ENCODE measurements at regions of chr5 and their contacts with region 1.

Region 1: GRCh38 chr5:147509710-147510651 is at the start of gene DPYSL3:
- DNase-seq: peak; percentile 22 to 88
- H3K4me3 ChIP-seq: peak within 1 kb of the TSS; percentile 65 to 70
- H3K27ac ChIP-seq: peak within 1 kb of the TSS; percentile 81 to 83
- H3K4me1 ChIP-seq: peaks cover 0 to 2% of the 10 kb centered on the region in 2 donors
- H3K27me3 ChIP-seq: no peaks in the 10 kb centered on the region
- CTCF ChIP-seq: peak in 2 of 3 experiments; percentile 47 to 60
- total RNA-seq, gene DPYSL3: 110 TPM

Region 2: GRCh38 chr5:146494656-146495055 is 1015.3 kb before region 1 on chr5:
- intact Hi-C with region 1: no loop called
- DNase-seq: no peak
- H3K4me3 ChIP-seq: no peak overlapping the region
- H3K27ac ChIP-seq: no peak overlapping the region
- H3K4me1 ChIP-seq: no peaks in the 10 kb centered on the region
- H3K27me3 ChIP-seq: no peaks in the 10 kb centered on the region
- CTCF ChIP-seq: no peak

Region 3: DNA sequence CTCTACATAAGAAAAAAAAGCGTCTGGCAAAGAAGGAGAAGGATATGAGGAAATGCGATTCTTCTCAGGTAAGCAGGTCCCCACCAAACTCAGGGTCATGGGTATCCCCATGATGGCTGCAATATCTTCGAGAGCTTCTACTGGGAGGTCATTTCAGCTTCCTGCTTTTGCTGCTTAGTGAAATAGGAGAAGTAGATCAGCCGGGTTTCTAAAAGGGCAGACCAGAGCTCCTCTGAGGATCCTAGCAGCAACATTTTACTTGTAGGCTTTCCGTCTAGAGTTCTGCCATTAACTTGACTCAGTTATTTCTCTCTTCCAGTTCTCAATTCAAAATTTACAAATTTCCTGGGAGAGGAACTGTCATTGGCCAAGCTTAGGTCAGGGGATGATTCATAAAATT is 134.8 kb before region 1 on chr5:
- intact Hi-C with region 1: loop called (anchors 5 kb)
- DNase-seq: no peak
- H3K4me3 ChIP-seq: no peak overlapping the region
- H3K27ac ChIP-seq: no peak overlapping the region
- H3K4me1 ChIP-seq: no peaks in the 10 kb centered on the region
- H3K27me3 ChIP-seq: no peaks in the 10 kb centered on the region
- CTCF ChIP-seq: no peak

Region 4: GRCh38 chr5:147403651-147404640 is 106.0 kb before region 1 on chr5:
- intact Hi-C with region 1: loop called (anchors 5 kb)
- DNase-seq: peak; percentile 76 to 94
- H3K4me3 ChIP-seq: peak overlapping the region; percentile 7 to 36
- H3K27ac ChIP-seq: peak overlapping the region; percentile 94 to 98
- H3K4me1 ChIP-seq: peaks cover 22 to 50% of the 10 kb centered on the region in 2 donors
- H3K27me3 ChIP-seq: no peaks in the 10 kb centered on the region
- CTCF ChIP-seq: no peak

Region 5: GRCh38 chr5:147483961-147484707 is 25.8 kb before region 1 on chr5:
- intact Hi-C with region 1: loop called (anchors 1 kb)
- DNase-seq: peak in 1 of 2 donors; percentile 85
- H3K4me3 ChIP-seq: no peak overlapping the region
- H3K27ac ChIP-seq: peak overlapping the region; percentile 64 to 82
- H3K4me1 ChIP-seq: peaks cover 10 to 46% of the 10 kb centered on the region in 2 donors
- H3K27me3 ChIP-seq: no peaks in the 10 kb centered on the region
- CTCF ChIP-seq: no peak

Region 6: DNA sequence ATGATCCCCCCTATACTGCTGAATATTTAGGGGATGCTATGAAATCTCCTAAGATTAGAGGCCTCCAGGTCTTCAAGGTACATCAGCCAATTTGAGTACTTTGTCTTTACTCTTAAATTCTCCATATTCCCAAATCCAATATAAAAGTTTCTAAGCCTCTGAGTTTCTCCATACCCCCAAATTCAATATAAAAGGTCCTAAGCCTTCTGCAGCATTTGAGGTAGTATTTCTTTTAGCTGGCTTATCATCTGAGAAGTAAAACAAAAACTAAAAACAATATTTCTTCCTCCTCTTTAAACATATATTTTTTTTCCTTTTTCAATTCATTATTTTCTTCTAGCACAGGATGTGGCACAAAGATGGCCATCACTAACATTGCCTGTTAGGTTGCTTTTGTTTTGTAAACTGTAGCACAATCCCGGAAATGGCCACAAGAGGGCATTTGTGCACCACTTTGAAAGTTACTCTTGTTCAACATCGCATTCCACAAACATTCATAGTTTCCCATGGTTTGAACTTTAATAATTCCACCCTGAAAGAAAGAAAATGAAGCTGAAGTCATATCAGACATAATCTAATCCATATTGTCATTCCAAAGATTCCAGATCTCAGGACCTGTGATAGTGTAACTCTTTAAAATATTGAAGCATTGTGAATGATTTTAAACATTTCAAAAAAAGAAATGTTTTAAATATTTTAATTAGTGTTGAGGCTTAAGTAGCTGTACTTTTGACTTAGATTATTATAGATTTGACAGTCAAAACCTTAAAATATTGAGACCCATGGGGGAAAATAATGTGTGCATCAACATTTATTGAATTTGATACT is 347.5 kb after region 1 on chr5:
- intact Hi-C with region 1: no loop called
- DNase-seq: peak in 1 of 2 donors; percentile 86
- H3K4me3 ChIP-seq: no peak overlapping the region
- H3K27ac ChIP-seq: no peak overlapping the region
- H3K4me1 ChIP-seq: peaks cover 0 to 3% of the 10 kb centered on the region in 2 donors
- H3K27me3 ChIP-seq: no peaks in the 10 kb centered on the region
- CTCF ChIP-seq: peak; percentile 41 to 82 (median 76)

Measured in ascending aorta (tissue), 2 donors.